ENCODE measurements at regions of chr7 and their contacts with region 1.

Region 1: DNA sequence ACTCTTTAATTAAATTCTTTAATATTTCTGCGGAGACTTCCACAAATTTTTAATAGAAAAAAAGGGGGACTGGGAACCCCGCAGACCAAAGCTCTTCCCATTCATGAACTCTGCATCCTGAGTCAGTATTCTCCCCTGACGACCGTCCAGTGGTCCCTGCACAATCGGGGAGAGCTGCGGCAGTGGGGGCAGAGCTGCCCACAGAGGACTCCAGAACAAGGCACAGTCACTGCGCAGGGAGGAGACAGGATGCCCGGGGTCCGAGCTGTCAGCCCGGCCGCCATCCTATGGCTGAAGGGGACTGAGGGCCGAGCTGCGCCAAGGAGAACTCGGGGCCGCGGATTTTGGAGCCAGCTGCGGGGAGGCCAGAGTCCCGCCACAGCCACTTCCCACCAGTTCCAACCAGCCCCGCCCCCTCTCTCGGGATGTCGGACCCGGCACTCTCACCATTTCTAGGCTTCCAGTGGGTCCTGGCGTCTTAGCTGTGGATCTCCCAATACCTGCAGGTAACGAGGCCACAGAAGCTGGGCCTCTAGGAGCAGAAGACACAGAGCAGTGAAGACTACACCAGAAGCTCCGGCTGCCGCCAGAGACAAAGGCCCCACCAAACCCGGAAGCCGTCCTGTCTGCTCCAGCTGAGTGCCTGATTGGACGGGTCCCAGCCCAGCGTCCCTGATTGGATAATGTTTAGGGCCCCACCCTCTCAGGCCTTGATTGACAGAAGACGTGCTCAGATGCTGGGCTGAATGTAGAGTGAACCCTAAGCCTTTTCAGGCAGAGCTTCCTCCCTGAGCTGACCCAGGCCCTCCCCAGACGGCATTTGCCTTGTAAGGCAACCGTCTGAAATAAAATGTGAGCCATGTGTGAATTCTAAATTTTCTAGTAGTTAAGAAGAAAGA is at the start of gene ERV3-1:
- DNase-seq: peak; percentile 95
- ATAC-seq: peak; percentile 99
- H3K4me3 ChIP-seq: peak within 1 kb of the TSS; percentile 60 to 89 (median 87)
- H3K4me3 Mint-ChIP-seq: peak within 1 kb of the TSS; percentile 95
- H3K27ac ChIP-seq: peak within 1 kb of the TSS; percentile 84 to 96
- H3K27ac Mint-ChIP-seq: peak within 1 kb of the TSS; percentile 91
- H3K4me1 ChIP-seq: peaks cover 20 to 33% of the 10 kb centered on the region in 2 donors
- H3K4me1 Mint-ChIP-seq: peaks cover 46% of the 10 kb centered on the region
- H3K27me3 ChIP-seq: no peaks in the 10 kb centered on the region
- H3K27me3 Mint-ChIP-seq: no peaks in the 10 kb centered on the region
- CTCF ChIP-seq: no peak
- total RNA-seq, gene ERV3-1: 29.1 and 30.7 TPM in 2 replicates

Region 2: GRCh38 chr7:63925623-63926460 is 1080.5 kb before region 1 on chr7:
- CTCF ChIA-PET with region 1: no interaction called
- POLR2A ChIA-PET with region 1: interaction called, 3 read pairs
- intact Hi-C with region 1: loop called (anchors 5 kb)
- DNase-seq: peak; percentile 96
- ATAC-seq: peak; percentile 89
- H3K4me3 ChIP-seq: peak overlapping the region; percentile 55 to 87 (median 71)
- H3K4me3 Mint-ChIP-seq: peak overlapping the region; percentile 93
- H3K27ac ChIP-seq: peak overlapping the region; percentile 84 to 85
- H3K27ac Mint-ChIP-seq: peak overlapping the region; percentile 96
- H3K4me1 ChIP-seq: peaks cover 0 to 11% of the 10 kb centered on the region in 2 donors
- H3K4me1 Mint-ChIP-seq: peaks cover 3% of the 10 kb centered on the region
- H3K27me3 ChIP-seq: no peaks in the 10 kb centered on the region
- H3K27me3 Mint-ChIP-seq: no peaks in the 10 kb centered on the region
- CTCF ChIP-seq: no peak

Region 3: DNA sequence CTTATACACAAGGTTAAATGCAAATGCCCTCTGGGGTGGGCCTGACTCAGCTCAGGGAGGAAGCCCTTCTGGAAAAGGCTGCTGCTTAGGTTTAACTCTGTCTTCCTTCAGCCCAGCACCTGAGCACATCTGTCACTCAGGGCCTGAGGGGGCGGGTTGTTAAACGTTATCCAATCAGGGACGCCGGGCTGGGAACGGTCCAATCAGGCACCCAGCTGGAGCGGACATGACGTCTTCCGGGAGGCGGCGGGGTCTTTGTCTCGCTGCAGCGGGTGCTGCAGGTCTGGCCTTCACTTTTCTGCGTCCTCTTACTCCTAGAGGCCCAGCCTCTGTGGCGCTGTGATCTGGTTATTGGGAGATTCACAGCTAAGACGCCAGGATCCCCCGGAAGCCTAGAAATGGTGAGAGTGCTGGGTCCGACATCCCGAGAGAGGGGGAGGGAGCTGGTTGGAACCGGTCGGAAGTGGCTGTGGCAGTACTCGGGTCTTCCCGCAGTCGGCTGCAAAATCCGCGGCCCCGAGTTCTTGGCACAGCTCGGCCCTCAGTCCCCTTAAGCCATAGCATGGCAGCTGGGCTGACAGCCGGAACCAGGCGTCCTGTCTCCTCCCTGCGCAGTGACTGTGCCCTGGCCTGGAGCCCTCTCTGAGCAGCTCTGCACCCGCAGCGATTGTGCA is 212.0 kb before region 1 on chr7 and contains the start of gene ZNF138:
- CTCF ChIA-PET with region 1: no interaction called
- POLR2A ChIA-PET with region 1: interaction called, 8 read pairs
- intact Hi-C with region 1: loop called (anchors 1 kb)
- DNase-seq: peak; percentile 93
- ATAC-seq: peak; percentile 99
- H3K4me3 ChIP-seq: peak within 1 kb of the TSS; percentile 72 to 89 (median 76)
- H3K4me3 Mint-ChIP-seq: peak within 1 kb of the TSS; percentile 99
- H3K27ac ChIP-seq: peak within 1 kb of the TSS; percentile 76 to 84
- H3K27ac Mint-ChIP-seq: peak within 1 kb of the TSS; percentile 97
- H3K4me1 ChIP-seq: peaks cover 13 to 14% of the 10 kb centered on the region in 2 donors
- H3K4me1 Mint-ChIP-seq: peaks cover 24% of the 10 kb centered on the region
- H3K27me3 ChIP-seq: no peaks in the 10 kb centered on the region
- H3K27me3 Mint-ChIP-seq: no peaks in the 10 kb centered on the region
- CTCF ChIP-seq: no peak
- total RNA-seq, gene ZNF138: 23.0 and 26.6 TPM in 2 replicates

Region 4: DNA sequence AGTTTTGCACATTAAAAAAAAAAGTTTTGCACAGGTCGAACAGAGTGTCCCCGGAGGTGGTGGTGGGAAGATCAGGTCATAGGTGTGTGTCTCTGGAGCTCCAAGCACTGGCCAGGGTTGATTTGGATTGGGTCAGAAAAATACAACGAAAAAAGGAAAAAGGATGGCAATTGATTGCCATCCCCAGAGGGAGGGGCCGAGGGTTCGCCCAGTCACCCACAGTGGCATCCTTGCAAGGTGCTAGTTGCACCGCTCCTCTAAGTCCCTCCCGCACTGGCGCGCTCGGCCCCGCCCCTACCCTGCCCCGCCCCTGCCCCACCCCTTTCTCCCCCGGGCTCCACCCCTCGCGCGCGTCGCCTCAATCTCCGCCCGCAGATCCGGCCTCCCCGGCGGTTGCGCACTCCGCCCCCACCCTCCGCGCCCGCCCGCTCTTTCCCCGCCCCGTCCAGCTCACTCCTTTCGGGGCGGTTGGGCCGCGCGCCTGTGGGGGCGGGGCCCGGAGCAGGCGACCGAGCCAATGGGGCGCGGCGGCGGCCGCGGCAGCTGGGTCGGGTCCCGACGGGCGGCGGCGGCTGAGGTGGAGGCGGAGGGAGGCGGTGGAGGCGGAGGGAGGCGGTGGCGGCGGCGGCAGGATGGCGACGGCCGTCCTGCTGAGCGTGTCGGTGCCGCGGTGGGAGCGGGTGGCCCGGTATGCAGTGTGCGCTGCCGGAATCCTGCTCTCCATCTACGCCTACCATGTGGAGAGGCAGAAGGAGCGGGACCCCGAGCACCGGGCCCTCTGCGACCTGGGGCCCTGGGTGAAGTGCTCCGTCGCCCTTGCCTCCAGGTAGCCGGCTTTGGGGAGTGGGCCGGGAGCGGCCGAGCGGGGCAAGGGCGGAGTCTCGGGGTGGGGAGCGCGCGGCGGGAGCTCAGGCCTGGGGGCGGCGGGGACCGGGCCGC is 31.7 kb after region 1 on chr7:
- CTCF ChIA-PET with region 1: no interaction called
- POLR2A ChIA-PET with region 1: interaction called, 3 read pairs
- intact Hi-C with region 1: loop called (anchors 1 kb)
- DNase-seq: peak; percentile 97
- ATAC-seq: peak; percentile 91
- H3K4me3 ChIP-seq: peak overlapping the region in 4 of 5 experiments; percentile 65 to 76 (median 70)
- H3K4me3 Mint-ChIP-seq: peak overlapping the region; percentile 70
- H3K27ac ChIP-seq: peak overlapping the region; percentile 76 to 79
- H3K27ac Mint-ChIP-seq: peak overlapping the region; percentile 72
- H3K4me1 ChIP-seq: peaks cover 9 to 12% of the 10 kb centered on the region in 2 donors
- H3K4me1 Mint-ChIP-seq: peaks cover 8% of the 10 kb centered on the region
- H3K27me3 ChIP-seq: no peaks in the 10 kb centered on the region
- H3K27me3 Mint-ChIP-seq: no peaks in the 10 kb centered on the region
- CTCF ChIP-seq: no peak